Caco-2 (cell line): ENCODE measurements at regions of chr1 and their contacts with region 1.

Region 1: GRCh38 chr1:154943649-154944400 is 7.3 kb upstream of the PMVK start:
- DNase-seq: peak in 1 of 2 experiments; percentile 65
- H3K4me3 ChIP-seq: no peak overlapping the region
- H3K4me3 Mint-ChIP-seq: no peak overlapping the region
- H3K27ac Mint-ChIP-seq: no peak overlapping the region
- H3K4me1 ChIP-seq: peaks cover 13% of the 10 kb centered on the region
- H3K4me1 Mint-ChIP-seq: peaks cover 19% of the 10 kb centered on the region
- H3K27me3 ChIP-seq: no peaks in the 10 kb centered on the region
- H3K27me3 Mint-ChIP-seq: no peaks in the 10 kb centered on the region
- CTCF ChIP-seq: peak; percentile 85 to 86

Region 2: DNA sequence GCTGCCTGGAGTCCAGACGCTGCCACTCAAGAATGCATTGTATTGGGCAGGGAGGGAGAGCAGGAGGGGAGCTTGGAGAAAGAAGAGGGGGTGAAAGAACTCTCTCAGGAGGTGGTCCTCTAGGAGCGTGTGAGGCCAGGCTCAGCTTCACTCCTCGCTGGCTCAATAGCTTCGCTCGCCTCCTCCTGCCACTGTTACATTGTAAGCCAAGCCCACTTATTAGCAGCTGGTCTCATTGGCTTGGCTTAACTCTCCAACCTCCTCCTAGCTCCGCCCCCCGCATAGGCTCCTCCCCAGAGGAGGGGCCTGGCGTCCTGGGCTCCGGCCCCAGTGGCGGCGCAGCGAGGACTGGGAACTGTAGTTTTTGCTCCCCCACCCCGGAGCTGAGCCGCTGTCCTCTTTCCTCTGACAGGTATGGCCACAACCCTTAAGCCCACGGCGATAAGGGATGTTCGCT is 73.7 kb before region 1 on chr1 and contains the start of gene KCNN3:
- CTCF ChIA-PET with region 1: no interaction called
- POLR2A ChIA-PET with region 1: no interaction called
- intact Hi-C with region 1: no loop called
- DNase-seq: peak; percentile 92 to 94
- H3K4me3 ChIP-seq: no peak within 1 kb of the TSS; the same call in 1 of the 2 replicates
- H3K4me3 Mint-ChIP-seq: peak within 1 kb of the TSS; percentile 41
- H3K27ac Mint-ChIP-seq: no peak within 1 kb of the TSS
- H3K4me1 ChIP-seq: no peaks in the 10 kb centered on the region
- H3K4me1 Mint-ChIP-seq: peaks cover 7% of the 10 kb centered on the region
- H3K27me3 ChIP-seq: peaks cover 2% of the 10 kb centered on the region; the same call in 1 of the 2 replicates
- H3K27me3 Mint-ChIP-seq: peaks cover 19% of the 10 kb centered on the region
- CTCF ChIP-seq: no peak
- total RNA-seq, gene KCNN3: 0.05 TPM in 1 of 2 replicates, not detected in the other

Region 3: DNA sequence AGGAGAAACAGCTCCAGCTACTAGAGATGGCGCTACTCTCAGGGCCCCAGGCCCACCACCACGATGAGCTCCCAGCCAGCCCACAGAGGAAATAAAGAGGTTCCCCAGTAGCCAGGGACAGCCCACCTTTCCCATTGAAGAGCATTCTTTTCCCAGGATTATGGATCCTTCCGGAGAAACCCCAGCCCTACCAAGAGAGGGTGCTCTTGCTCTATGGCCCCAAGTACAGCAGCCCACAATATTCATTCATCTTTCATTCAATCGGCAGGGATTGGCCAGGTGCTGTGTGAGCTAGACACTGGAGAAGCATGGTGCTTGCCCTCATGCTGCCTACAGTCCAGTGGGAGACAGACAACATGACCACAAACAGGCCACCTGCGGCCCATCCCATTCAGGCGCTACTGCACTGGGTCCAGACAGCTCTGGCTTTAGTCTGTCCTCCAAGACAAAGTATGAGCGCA is 37.2 kb before region 1 on chr1:
- CTCF ChIA-PET with region 1: no interaction called
- POLR2A ChIA-PET with region 1: interaction called, 4 read pairs
- intact Hi-C with region 1: loop called (anchors 2 kb)
- DNase-seq: peak in 1 of 2 experiments; percentile 22
- H3K4me3 ChIP-seq: no peak overlapping the region
- H3K4me3 Mint-ChIP-seq: no peak overlapping the region
- H3K27ac Mint-ChIP-seq: no peak overlapping the region
- H3K4me1 ChIP-seq: no peaks in the 10 kb centered on the region
- H3K4me1 Mint-ChIP-seq: no peaks in the 10 kb centered on the region
- H3K27me3 ChIP-seq: no peaks in the 10 kb centered on the region
- H3K27me3 Mint-ChIP-seq: peaks cover 2% of the 10 kb centered on the region
- CTCF ChIP-seq: peak in 1 of 2 experiments; percentile 55

Region 4: DNA sequence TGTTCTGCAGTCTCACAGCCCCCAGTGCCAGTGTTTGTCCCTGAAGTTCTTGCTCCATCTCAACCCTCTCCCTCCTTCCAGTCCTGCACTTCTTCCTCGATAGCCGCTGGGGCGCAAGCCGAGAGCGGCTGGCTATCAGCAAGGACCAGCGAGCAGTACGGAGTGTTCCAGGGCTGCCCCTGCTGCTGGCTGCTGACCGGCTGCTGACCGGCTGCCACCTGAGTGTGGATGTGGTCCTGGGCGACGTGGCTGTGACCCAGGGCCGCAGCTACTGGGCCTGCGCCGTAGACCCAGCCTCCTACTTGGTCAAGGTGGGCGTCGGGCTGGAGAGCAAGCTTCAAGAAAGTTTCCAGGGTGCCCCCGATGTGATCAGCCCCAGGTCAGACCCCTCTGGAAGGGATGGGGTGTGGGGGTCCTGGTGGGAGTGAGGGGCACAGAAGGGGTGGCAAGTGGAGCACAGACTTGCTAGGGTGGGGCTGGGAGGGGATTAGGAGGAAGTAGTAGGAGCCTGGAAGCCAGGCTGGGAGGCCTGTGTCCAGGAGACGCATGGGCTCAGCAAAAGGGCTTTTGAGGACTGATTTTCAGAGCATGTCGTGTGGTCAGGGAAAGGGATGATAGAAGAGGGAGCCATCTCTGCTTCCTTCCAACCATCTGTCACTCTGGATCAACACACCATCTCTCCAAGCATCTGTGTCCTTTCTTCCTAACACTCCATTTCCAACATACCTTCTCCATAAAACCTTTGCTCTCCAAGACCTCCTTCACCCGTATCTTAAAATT is 238.1 kb after region 1 on chr1:
- CTCF ChIA-PET with region 1: interaction called, 12 read pairs
- POLR2A ChIA-PET with region 1: no interaction called
- intact Hi-C with region 1: no loop called
- DNase-seq: peak in 1 of 2 experiments; percentile 22
- H3K4me3 ChIP-seq: no peak overlapping the region
- H3K4me3 Mint-ChIP-seq: no peak overlapping the region
- H3K27ac Mint-ChIP-seq: no peak overlapping the region
- H3K4me1 ChIP-seq: peaks cover 21% of the 10 kb centered on the region
- H3K4me1 Mint-ChIP-seq: peaks cover 22% of the 10 kb centered on the region
- H3K27me3 ChIP-seq: no peaks in the 10 kb centered on the region
- H3K27me3 Mint-ChIP-seq: no peaks in the 10 kb centered on the region
- CTCF ChIP-seq: no peak